IMR-90 (cell line): ENCODE measurements at regions of chr22 and their contacts with region 1.

Region 1: DNA sequence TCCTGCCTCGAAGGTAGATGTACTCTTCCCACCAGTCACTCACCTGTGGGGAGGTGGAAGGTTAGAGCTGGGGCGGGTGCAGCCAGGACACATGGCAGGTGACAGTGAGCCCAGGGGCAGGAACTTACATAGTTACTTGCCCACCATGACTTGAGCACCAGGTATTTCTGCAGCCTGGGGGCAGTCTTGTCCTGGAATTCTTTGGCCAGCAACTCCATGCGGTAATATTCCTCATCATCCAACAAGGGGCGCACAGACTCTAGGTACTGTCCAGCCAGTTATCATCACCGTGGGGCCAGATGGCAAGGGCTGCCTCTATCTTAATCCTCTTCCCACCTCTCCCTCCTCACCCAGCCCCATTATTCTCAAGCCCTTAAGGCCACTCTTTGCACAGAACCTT is 2.2 kb downstream of the CPT1B start:
- DNase-seq: peak; percentile 44
- ATAC-seq: 0 out of 2 replicates have a peak, but pooled peaks have one; percentile 38
- H3K4me3 ChIP-seq: no peak overlapping the region
- H3K27ac ChIP-seq: no peak overlapping the region
- H3K4me1 ChIP-seq: peaks cover 12% of the 10 kb centered on the region
- H3K27me3 ChIP-seq: no peaks in the 10 kb centered on the region
- CTCF ChIP-seq: peak; percentile 60
- POLR2A ChIP-seq: no peak
- RAD21 ChIP-seq: peak; percentile 61

Region 2: DNA sequence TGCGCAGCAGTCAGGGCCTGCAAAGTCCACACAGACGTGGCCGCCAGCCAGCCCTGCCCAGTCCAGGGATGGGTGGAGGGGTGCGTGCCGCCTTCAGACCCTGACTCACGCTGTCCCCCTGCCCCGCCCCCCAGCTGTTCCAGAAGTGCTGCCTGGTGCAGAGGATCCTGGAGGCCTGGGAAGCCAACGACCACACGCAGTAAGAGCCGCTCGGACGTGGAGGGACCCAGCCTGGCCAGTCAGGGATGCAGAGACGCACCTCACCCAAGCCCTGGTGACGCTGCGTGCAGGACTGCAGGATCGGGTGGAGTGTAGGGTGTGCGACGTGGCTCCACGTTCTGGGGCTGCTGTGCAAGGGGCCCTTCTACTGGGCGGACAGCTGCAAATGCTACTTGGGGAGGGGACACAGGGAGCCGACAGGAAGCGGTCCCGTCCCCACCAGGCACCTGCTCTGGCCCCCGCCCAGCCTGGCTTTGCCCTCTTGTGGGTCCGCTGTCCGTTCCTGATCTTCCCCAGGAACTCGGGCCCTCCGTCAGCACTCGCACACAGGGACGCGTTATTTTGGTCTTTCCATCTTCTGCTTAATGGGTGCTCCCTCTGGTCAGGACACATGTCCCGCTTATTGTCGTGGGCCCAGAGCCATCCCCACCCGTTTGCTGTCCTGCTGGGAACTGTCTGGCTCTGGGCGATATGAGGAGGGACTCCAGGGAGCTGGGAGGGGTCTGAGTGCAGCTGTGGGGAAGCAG is 143.8 kb before region 1 on chr22:
- CTCF ChIA-PET with region 1: no interaction called
- POLR2A ChIA-PET with region 1: no interaction called
- dilution Hi-C with region 1: no loop called
- in situ Hi-C with region 1: no loop called
- intact Hi-C with region 1: no loop called
- DNase-seq: no peak
- ATAC-seq: no peak
- H3K4me3 ChIP-seq: no peak overlapping the region
- H3K27ac ChIP-seq: no peak overlapping the region
- H3K4me1 ChIP-seq: no peaks in the 10 kb centered on the region
- H3K27me3 ChIP-seq: no peaks in the 10 kb centered on the region
- CTCF ChIP-seq: no peak
- POLR2A ChIP-seq: no peak
- RAD21 ChIP-seq: no peak

Region 3: DNA sequence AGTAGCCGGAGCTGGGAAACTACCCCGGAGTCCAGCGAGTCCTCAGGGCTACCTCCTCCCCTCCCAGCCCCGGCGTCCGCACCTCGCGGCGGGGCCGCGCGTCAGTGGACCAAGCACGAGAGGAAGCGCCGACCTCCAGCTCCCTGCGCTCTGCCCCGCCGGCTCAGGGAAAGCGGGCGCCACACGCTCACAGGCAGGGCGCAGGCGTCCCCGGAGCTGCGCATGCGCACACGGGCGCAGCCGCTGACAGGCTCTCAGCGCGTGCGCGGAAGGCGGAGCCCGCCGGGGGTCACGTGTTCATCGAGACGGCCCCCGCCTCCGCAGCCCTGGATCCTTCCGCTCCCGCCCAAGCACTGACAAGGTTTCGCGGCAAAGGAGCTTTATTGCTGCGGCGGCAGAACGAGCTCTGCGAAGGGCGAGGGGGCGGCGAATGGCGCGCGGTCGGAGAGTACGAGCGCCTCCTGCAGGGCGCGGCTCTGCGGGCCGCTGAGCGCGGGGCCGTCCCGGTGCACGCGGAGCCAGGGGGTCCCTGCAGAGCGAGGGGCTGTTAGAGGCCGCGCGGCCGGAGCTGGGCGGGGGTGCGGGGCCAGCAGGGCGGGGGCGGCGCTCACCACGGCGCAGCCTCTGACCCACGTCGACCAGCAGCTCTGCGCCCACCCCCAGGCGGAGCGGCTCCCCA is 50.5 kb before region 1 on chr22 and contains the start of gene SCO2:
- CTCF ChIA-PET with region 1: interaction called, 4 read pairs
- POLR2A ChIA-PET with region 1: interaction called, 3 read pairs
- dilution Hi-C with region 1: no loop called
- in situ Hi-C with region 1: loop called (anchors 5 kb)
- intact Hi-C with region 1: loop called (anchors 5 kb)
- DNase-seq: peak; percentile 97
- ATAC-seq: peak; percentile 71
- H3K4me3 ChIP-seq: peak within 1 kb of the TSS; percentile 84
- H3K27ac ChIP-seq: peak within 1 kb of the TSS; percentile 96
- H3K4me1 ChIP-seq: peaks cover 13% of the 10 kb centered on the region
- H3K27me3 ChIP-seq: no peaks in the 10 kb centered on the region
- CTCF ChIP-seq: peak; percentile 63
- POLR2A ChIP-seq: peak; percentile 83
- RAD21 ChIP-seq: peak; percentile 47
- total RNA-seq, gene SCO2: 1.3 and 1.7 TPM in 2 replicates

Region 4: GRCh38 chr22:50620593-50621355 is 44.7 kb after region 1 on chr22:
- CTCF ChIA-PET with region 1: no interaction called
- POLR2A ChIA-PET with region 1: no interaction called
- dilution Hi-C with region 1: no loop called
- in situ Hi-C with region 1: no loop called
- intact Hi-C with region 1: loop called (anchors 5 kb)
- DNase-seq: no peak
- ATAC-seq: peak; percentile 92
- H3K4me3 ChIP-seq: no peak overlapping the region
- H3K27ac ChIP-seq: no peak overlapping the region
- H3K4me1 ChIP-seq: peaks cover 7% of the 10 kb centered on the region; the same call in 1 of the 2 replicates
- H3K27me3 ChIP-seq: peaks cover 2% of the 10 kb centered on the region
- CTCF ChIP-seq: no peak
- POLR2A ChIP-seq: no peak
- RAD21 ChIP-seq: no peak